Activated B cell treated with CpG ODN at 0.5 μM for 24 hours (primary cell): ENCODE measurements at regions of chr5 and their contacts with region 1.

Region 1: GRCh38 chr5:132963175-132964104 is at the start of gene AFF4:
- DNase-seq: peak; percentile 94
- ATAC-seq: peak; percentile 86
- H3K4me3 Mint-ChIP-seq: peak within 1 kb of the TSS; percentile 94
- H3K27ac Mint-ChIP-seq: peak within 1 kb of the TSS; percentile 94
- H3K4me1 Mint-ChIP-seq: peaks cover 37% of the 10 kb centered on the region
- H3K27me3 Mint-ChIP-seq: no peaks in the 10 kb centered on the region
- CTCF ChIP-seq: no peak
- total RNA-seq, gene AFF4: 42.7 and 51.8 TPM in 2 replicates

Region 2: GRCh38 chr5:132736853-132737833 is 226.3 kb before region 1 on chr5 and contains the start of gene KIF3A:
- CTCF ChIA-PET with region 1: no interaction called
- POLR2A ChIA-PET with region 1: interaction called, 4 read pairs
- intact Hi-C with region 1: loop called (anchors 2 kb)
- DNase-seq: peak; percentile 98
- ATAC-seq: peak; percentile 92
- H3K4me3 Mint-ChIP-seq: peak within 1 kb of the TSS; percentile 90
- H3K27ac Mint-ChIP-seq: peak within 1 kb of the TSS; percentile 87
- H3K4me1 Mint-ChIP-seq: peaks cover 18% of the 10 kb centered on the region
- H3K27me3 Mint-ChIP-seq: peaks cover 5% of the 10 kb centered on the region
- CTCF ChIP-seq: no peak
- total RNA-seq, gene KIF3A: 9.2 and 9.8 TPM in 2 replicates

Region 3: DNA sequence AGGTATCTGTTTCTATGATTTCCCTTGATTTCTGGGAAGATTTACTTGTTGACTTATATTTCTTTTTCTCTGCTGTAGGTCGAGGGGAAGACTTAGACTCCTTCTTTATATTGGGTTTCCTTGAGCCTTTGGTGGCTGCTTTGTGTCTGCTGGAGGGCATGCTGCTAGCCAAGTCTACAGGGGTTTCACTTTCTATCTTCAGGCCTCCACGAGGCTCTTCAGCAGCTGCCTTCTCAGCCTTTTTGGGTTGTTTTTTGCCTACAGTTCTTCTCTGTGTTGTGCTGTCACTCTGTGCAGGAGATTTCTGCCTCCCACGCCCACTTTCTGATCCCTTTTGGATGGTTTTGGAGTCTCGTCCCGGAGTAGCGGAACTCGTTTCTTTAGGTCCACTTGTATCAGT is 66.8 kb before region 1 on chr5:
- CTCF ChIA-PET with region 1: no interaction called
- POLR2A ChIA-PET with region 1: no interaction called
- intact Hi-C with region 1: no loop called
- DNase-seq: no peak
- ATAC-seq: no peak
- H3K4me3 Mint-ChIP-seq: no peak overlapping the region
- H3K27ac Mint-ChIP-seq: peak overlapping the region; percentile 31
- H3K4me1 Mint-ChIP-seq: no peaks in the 10 kb centered on the region
- H3K27me3 Mint-ChIP-seq: no peaks in the 10 kb centered on the region
- CTCF ChIP-seq: no peak

Region 4: DNA sequence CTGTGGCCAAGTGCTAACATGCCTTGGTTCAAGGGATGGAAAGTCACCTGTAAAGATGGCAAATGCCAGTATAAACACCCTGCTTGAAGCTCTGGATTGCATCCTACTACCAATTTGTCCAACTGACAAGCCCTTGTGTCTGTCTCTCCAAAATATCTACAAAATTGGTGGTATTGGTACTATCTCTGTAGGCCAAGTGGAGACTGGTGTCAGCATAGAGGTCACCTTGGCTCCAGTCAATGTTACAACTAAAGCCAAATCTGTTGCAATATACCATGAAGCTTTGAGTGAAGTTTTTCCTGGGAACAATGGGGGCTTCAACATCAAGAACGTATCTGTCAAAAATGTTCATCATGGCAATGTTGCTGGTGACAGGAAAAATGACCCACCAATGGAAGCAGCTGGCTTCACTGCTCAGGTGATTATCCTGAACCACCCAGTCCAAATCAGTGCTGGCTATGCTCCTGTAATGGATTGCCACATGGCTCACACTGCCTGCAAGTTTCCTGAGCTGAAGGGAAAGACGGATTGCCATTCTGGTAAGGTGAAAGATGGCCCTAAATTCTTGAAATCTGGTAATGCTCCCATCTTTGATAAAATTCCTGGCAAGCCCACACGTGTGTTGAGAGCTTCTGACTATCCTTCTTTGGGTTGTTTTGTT is 19.9 kb before region 1 on chr5:
- CTCF ChIA-PET with region 1: interaction called, 3 read pairs
- POLR2A ChIA-PET with region 1: interaction called, 15 read pairs
- intact Hi-C with region 1: no loop called
- DNase-seq: no peak
- ATAC-seq: no peak
- H3K4me3 Mint-ChIP-seq: no peak overlapping the region
- H3K27ac Mint-ChIP-seq: no peak overlapping the region
- H3K4me1 Mint-ChIP-seq: peaks cover 35% of the 10 kb centered on the region
- H3K27me3 Mint-ChIP-seq: no peaks in the 10 kb centered on the region
- CTCF ChIP-seq: no peak

Region 5: DNA sequence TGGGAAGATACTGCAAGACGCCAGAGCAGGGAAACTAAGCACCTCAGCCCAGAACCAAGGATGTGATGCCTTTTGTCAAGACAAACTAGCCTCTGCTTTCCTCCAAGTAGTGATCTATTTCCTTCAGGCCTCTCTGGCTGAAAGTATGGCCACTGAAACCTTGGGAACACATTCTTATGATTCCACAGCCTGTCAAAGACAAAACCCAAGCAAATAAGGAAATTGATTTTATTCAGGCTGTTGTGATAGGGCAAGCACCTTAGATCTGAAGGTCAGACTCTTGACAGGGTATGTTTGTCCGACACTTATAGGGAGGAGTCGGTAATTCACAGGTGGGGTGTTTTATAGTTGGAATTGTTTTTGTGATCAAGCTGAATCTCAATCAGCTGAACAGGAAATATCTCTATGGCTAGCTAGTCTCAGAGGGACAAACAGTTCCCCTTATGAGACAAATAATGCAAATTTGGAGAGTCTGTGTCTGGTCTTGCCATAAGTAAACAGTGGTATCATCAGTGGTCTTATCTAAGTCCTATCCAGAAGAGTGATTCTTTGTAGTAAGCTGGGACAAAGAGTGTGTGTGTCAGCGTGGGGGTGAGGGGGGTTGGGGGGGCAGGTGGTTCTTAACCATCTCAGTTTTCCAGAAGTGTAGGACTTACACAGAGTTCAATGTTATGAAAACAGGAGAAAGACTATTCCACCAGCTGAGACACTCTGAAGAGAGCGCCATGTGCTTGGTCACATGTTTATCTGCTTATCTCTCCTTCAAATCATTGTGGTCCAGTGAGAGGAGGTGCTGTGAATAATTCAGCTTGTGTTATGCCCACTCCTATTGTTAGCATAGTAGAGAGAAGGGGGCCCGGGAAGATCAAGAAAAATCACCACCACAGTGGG is 69.7 kb after region 1 on chr5:
- CTCF ChIA-PET with region 1: no interaction called
- POLR2A ChIA-PET with region 1: interaction called, 23 read pairs
- intact Hi-C with region 1: no loop called
- DNase-seq: no peak
- ATAC-seq: peak; percentile 88
- H3K4me3 Mint-ChIP-seq: peak overlapping the region; percentile 68
- H3K27ac Mint-ChIP-seq: peak overlapping the region; percentile 89
- H3K4me1 Mint-ChIP-seq: peaks cover 64% of the 10 kb centered on the region
- H3K27me3 Mint-ChIP-seq: no peaks in the 10 kb centered on the region
- CTCF ChIP-seq: no peak

Region 6: GRCh38 chr5:133398646-133399101 is 435.2 kb after region 1 on chr5:
- CTCF ChIA-PET with region 1: no interaction called
- POLR2A ChIA-PET with region 1: no interaction called
- intact Hi-C with region 1: loop called (anchors 5 kb)
- DNase-seq: no peak
- ATAC-seq: peak; percentile 88
- H3K4me3 Mint-ChIP-seq: peak overlapping the region; percentile 59
- H3K27ac Mint-ChIP-seq: peak overlapping the region; percentile 94
- H3K4me1 Mint-ChIP-seq: peaks cover 48% of the 10 kb centered on the region
- H3K27me3 Mint-ChIP-seq: no peaks in the 10 kb centered on the region
- CTCF ChIP-seq: no peak

Region 7: GRCh38 chr5:133499895-133500294 is 536.5 kb after region 1 on chr5:
- CTCF ChIA-PET with region 1: no interaction called
- POLR2A ChIA-PET with region 1: no interaction called
- intact Hi-C with region 1: no loop called
- DNase-seq: no peak
- ATAC-seq: no peak
- H3K4me3 Mint-ChIP-seq: no peak overlapping the region
- H3K27ac Mint-ChIP-seq: no peak overlapping the region
- H3K4me1 Mint-ChIP-seq: no peaks in the 10 kb centered on the region
- H3K27me3 Mint-ChIP-seq: peaks cover 34% of the 10 kb centered on the region
- CTCF ChIP-seq: no peak